ENCODE measurements at regions of chr7 and their contacts with region 1.

Region 1: DNA sequence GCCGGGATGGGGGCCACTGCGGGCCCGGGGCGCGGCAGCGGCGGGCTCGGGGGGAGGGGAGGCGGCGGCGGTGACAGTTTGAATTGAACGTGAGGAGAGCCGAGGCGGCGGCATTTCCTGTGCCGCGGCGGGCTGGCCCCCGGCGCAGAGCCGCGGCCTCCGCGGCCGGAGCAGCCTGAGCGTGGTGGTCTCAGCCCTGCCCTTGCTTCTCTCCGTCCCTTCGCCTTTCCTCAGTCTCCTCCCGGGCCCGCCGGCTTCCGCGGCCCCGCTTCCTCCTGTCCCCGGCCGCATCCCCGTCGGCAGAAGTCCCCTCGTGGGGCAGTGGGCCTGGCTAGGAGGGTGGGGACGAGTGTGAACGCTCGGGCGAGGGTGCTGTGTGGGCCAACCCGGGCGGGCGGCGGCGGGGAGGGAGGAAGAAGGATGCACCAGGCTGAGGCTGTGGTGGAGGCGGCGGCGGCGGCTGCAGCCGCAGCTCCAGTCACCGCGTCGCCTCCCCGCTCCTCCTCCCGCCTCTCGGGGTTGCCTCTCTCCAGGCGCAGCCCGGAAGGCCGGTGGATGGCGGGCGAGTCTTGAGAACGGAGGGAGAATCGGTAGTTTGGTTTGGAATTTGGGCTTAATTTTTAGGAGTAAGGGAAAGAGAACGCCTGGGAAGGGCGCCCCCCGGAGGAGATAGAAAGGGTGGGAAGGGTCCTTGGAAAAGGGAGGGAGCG is 690 bp downstream of the SEPTIN7 start:
- DNase-seq: peak in 1 of 2 experiments; percentile 82
- H3K4me3 ChIP-seq: peak overlapping the region; percentile 84 to 94 (median 86)
- H3K27ac ChIP-seq: peak overlapping the region; percentile 87
- H3K4me1 ChIP-seq: peaks cover 0 to 7% (median 1%) of the 10 kb centered on the region in 4 experiments; a peak in 3 of 7 replicates
- H3K27me3 ChIP-seq: no peaks in the 10 kb centered on the region
- CTCF ChIP-seq: peak; percentile 50 to 65 (median 56)
- EP300 ChIP-seq: no peak
- POLR2A ChIP-seq: no peak; a peak in 2 of 3 replicates
- RAD21 ChIP-seq: peak; percentile 40 to 55; a peak in 3 of 4 replicates

Region 2: GRCh38 chr7:35694781-35695472 is 106.6 kb before region 1 on chr7 and contains the start of gene HERPUD2:
- CTCF ChIA-PET with region 1: interaction called, 4 read pairs
- POLR2A ChIA-PET with region 1: interaction called, 38 read pairs
- DNase-seq: peak; percentile 79 to 91
- H3K4me3 ChIP-seq: peak within 1 kb of the TSS; percentile 83 to 90 (median 87)
- H3K27ac ChIP-seq: peak within 1 kb of the TSS; percentile 93
- H3K4me1 ChIP-seq: peaks cover 2 to 6% (median 4%) of the 10 kb centered on the region in 4 experiments; a peak in 5 of 7 replicates
- H3K27me3 ChIP-seq: no peaks in the 10 kb centered on the region; a peak in 3 of 7 replicates
- CTCF ChIP-seq: no peak
- EP300 ChIP-seq: peak in 1 of 2 experiments; percentile 23; a peak in 1 of 3 replicates
- POLR2A ChIP-seq: peak; percentile 86 to 93
- RAD21 ChIP-seq: no peak; a peak in 1 of 4 replicates
- total RNA-seq, gene HERPUD2: 15.6 and 18.3 TPM in 2 replicates

Region 3: GRCh38 chr7:35716038-35716803 is 85.3 kb before region 1 on chr7:
- CTCF ChIA-PET with region 1: interaction called, 18 read pairs
- POLR2A ChIA-PET with region 1: interaction called, 10 read pairs
- DNase-seq: no peak
- H3K4me3 ChIP-seq: no peak overlapping the region
- H3K27ac ChIP-seq: no peak overlapping the region
- H3K4me1 ChIP-seq: peaks cover 0 to 4% (median 2%) of the 10 kb centered on the region in 4 experiments; a peak in 2 of 7 replicates
- H3K27me3 ChIP-seq: no peaks in the 10 kb centered on the region
- CTCF ChIP-seq: no peak
- EP300 ChIP-seq: no peak
- POLR2A ChIP-seq: no peak
- RAD21 ChIP-seq: no peak

Region 4: GRCh38 chr7:35787925-35788324 is 13.6 kb before region 1 on chr7:
- CTCF ChIA-PET with region 1: interaction called, 12 read pairs
- POLR2A ChIA-PET with region 1: interaction called, 17 read pairs
- DNase-seq: no peak
- H3K4me3 ChIP-seq: no peak overlapping the region
- H3K27ac ChIP-seq: no peak overlapping the region
- H3K4me1 ChIP-seq: no peaks in the 10 kb centered on the region
- H3K27me3 ChIP-seq: no peaks in the 10 kb centered on the region
- CTCF ChIP-seq: no peak
- EP300 ChIP-seq: no peak
- POLR2A ChIP-seq: no peak
- RAD21 ChIP-seq: no peak

Region 5: DNA sequence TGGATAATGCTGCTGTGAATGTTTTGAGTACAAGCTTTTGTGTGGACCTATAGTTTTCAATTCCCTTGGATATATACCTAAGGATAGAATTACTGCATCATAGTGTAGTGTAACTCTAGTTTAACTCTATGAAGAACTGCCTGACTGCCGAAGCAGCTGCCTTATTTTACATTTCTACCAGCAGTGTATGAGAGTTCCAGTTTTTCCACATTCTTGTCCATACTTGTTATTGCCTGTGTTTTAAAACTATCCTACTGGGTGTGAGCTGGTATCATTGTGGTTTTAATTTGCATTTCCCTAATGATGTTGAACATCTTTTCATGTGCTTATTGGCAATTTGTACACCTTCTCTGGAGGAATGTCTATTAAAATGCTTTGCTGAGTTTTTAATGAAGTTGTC is 15.0 kb after region 1 on chr7:
- CTCF ChIA-PET with region 1: interaction called, 8 read pairs
- POLR2A ChIA-PET with region 1: interaction called, 12 read pairs
- DNase-seq: no peak
- H3K4me3 ChIP-seq: no peak overlapping the region
- H3K27ac ChIP-seq: no peak overlapping the region
- H3K4me1 ChIP-seq: peaks cover 0 to 10% (median 2%) of the 10 kb centered on the region in 4 experiments; a peak in 1 of 7 replicates
- H3K27me3 ChIP-seq: no peaks in the 10 kb centered on the region
- CTCF ChIP-seq: no peak
- EP300 ChIP-seq: no peak
- POLR2A ChIP-seq: no peak
- RAD21 ChIP-seq: no peak

Region 6: GRCh38 chr7:35906191-35906908 is 104.8 kb after region 1 on chr7:
- CTCF ChIA-PET with region 1: interaction called, 17 read pairs
- POLR2A ChIA-PET with region 1: interaction called, 6 read pairs
- DNase-seq: peak; percentile 31 to 75
- H3K4me3 ChIP-seq: no peak overlapping the region
- H3K27ac ChIP-seq: no peak overlapping the region
- H3K4me1 ChIP-seq: peaks cover 2 to 14% (median 8%) of the 10 kb centered on the region in 4 experiments; a peak in 6 of 7 replicates
- H3K27me3 ChIP-seq: no peaks in the 10 kb centered on the region
- CTCF ChIP-seq: peak in 2 of 3 experiments; percentile 78 to 84; a peak in 3 of 4 replicates
- EP300 ChIP-seq: no peak
- POLR2A ChIP-seq: no peak
- RAD21 ChIP-seq: peak; percentile 92 to 95

Region 7: GRCh38 chr7:36021367-36021766 is 219.8 kb after region 1 on chr7:
- CTCF ChIA-PET with region 1: no interaction called
- POLR2A ChIA-PET with region 1: no interaction called
- DNase-seq: peak in 1 of 2 experiments; percentile 73
- H3K4me3 ChIP-seq: no peak overlapping the region
- H3K27ac ChIP-seq: no peak overlapping the region
- H3K4me1 ChIP-seq: no peaks in the 10 kb centered on the region; a peak in 1 of 7 replicates
- H3K27me3 ChIP-seq: no peaks in the 10 kb centered on the region
- CTCF ChIP-seq: peak; percentile 74 to 90 (median 88)
- EP300 ChIP-seq: no peak
- POLR2A ChIP-seq: no peak
- RAD21 ChIP-seq: peak; percentile 80 to 94

Region 8: DNA sequence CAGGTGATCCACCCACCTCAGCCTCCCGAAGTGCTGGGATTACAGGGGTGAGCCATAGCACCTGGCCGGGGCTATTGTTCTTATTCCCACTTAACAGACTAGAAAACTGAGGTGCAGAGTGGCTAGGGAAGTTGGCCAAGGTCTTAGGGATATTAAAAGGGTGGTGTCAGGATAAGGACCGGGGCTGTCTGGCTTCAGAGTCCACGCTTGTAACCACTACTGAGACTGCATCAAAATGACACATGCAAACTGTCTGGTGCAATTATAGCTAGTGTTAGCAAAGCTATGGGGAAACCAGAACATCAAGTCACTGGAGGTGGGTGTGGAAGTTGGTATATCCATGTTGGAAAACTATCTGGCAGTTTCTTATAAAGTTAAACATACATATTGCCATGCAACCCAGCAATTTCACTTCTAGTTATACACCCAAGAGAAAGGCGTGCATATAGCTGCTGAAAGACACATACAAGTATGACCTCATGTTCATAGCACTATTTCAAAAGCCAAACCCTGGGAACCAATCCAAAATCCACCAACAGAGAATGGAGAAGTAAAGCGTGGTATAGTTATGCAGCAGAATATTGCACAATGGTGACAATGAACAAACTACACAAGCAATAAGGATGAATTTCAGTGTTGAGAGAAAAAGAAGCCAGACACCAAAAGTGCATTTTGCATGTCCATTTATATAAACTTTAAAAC is 317.6 kb after region 1 on chr7:
- CTCF ChIA-PET with region 1: no interaction called
- POLR2A ChIA-PET with region 1: no interaction called
- DNase-seq: no peak
- H3K4me3 ChIP-seq: no peak overlapping the region
- H3K27ac ChIP-seq: no peak overlapping the region
- H3K4me1 ChIP-seq: peaks cover 0 to 4% (median 2%) of the 10 kb centered on the region in 4 experiments; a peak in 3 of 7 replicates
- H3K27me3 ChIP-seq: no peaks in the 10 kb centered on the region
- CTCF ChIP-seq: no peak
- EP300 ChIP-seq: no peak
- POLR2A ChIP-seq: no peak
- RAD21 ChIP-seq: no peak